ENCODE measurements at regions of chr5 and their contacts with region 1.

Region 1: DNA sequence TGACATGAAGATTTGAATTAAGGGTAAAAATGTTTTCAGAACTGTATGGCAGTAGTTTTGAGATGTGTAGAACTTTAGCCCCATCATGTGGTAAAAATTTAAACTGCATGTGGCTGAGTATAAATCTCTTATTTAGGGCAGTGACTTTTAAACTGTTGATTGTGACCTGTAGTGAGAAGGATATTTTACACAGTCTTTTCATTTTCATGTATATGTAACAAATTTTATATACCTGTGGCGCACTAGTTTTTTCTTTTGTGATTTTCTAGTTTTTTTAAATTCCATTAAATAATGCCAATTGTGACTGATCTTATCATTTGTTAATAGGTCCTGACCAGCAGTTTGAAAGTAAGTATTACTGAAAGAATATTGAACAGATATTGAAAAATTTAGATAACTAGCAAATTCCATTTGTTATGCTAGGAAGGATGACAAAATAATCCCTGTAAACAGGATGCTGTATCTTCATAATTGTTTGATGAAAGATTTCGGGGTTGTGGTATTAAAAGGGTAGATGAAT is 47.2 kb downstream of the GPBP1 start:
- DNase-seq: no peak
- ATAC-seq: peak; percentile 55 to 64

Region 2: DNA sequence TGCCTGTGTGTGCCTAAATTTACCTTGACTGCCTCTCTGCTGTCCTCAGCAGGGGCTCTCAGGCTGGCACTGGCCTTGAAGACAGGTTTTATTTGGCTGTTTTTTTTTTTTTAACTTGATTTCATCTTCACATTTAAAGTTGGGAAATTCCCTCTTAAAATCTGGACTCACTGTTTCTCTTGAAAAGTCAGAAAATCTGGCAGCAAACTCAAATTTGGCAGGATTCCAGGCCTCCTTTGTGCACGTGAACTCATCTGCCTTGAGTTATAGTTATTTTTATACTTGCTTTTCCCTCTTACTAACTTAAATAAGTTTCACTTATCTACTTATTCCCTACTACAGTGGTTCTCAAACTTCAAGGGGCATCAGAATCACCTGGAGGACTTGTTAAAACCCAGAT is 524.2 kb before region 1 on chr5:
- intact Hi-C with region 1: no loop called
- DNase-seq: no peak
- ATAC-seq: no peak

Region 3: GRCh38 chr5:56900858-56901578 is 320.1 kb before region 1 on chr5:
- intact Hi-C with region 1: loop called in 1 of 2 experiments (anchors 5 kb)
- DNase-seq: no peak
- ATAC-seq: peak; percentile 57 to 63

Region 4: GRCh38 chr5:57137401-57137800 is 83.7 kb before region 1 on chr5:
- intact Hi-C with region 1: loop called in 1 of 2 experiments (anchors 2 kb)
- DNase-seq: no peak
- ATAC-seq: no peak

Region 5: DNA sequence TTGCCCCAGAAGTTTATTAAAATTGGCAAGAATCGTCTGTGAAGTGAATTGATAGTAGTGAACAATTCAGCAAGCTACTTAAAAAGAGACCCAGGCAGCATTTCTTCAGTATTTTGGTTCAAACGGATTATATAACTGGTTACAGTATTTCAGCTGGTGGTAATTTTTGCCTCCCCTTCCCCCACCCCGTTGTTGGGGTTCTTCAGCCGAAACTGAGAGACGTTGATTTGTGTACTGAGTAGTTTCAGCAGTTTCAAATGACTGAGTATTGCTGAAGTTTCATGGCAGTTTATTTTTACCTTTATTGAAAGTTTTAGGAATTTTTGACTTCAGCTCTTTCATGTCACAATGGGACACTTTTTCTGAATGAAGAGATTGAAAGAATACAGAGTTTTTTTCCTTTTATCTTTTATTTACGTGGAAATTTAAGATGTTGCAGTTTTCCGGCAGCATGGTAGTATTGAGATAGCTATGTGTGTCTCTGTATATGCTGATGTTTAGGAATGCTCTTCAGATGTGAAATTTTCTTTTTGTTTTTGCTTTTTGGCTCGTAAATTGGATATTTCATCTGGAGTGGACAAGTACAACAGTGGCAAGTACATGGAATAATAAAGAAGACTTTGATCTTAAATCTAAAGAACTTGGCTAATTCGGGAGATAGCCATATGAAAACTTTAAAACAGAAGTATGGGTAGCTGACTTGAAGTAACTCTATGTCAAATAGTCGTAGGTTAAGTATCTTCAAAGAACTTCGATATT is 45.4 kb before region 1 on chr5:
- intact Hi-C with region 1: loop called in 1 of 2 experiments (anchors 5 kb)
- DNase-seq: no peak
- ATAC-seq: no peak

Region 6: GRCh38 chr5:57316798-57317327 is 95.8 kb after region 1 on chr5:
- intact Hi-C with region 1: no loop called
- DNase-seq: no peak
- ATAC-seq: peak; percentile 15 to 56

Measured in left cardiac atrium (tissue), 4 donors.